ENCODE measurements at regions of chr6 and their contacts with region 1.

Region 1: DNA sequence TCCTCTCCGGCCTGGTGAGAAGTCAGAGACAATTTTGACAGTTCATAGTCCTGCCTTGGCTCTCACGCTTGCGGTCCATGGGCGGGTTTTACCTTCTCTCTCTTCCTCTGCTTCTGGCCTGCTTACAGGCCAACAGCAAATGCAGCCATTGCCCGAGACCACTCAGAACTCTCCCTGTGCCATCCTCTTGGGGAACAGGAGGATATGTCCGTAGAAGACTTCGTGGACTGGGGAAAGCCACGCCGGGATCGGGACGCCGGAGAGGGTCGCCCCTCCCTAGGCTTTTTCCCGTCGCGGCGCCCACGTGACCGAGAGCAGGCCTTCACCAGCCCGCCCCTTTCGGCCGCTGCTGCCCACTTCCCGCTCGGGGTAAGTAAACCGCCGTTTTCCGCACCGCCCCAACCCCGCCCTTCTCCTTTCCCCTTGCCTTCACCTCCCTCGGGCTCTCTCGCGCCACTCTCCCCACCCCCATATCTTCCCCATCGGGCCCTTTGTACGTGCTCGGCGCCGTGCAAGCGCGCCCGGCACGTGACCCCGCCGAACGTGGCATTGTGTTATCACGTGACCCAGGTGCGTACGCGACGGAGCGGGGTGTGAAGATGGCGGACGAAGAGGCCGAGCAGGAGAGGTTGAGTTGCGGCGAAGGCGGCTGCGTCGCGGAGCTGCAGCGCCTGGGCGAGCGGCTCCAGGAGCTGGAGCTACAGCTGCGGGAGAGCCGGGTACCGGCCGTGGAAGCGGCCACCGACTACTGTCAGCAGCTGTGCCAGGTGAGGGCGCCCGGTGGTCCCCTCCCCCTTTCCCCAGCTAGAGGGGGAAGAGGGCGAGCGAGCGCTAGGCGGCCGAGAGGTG is at the start of gene ZNF292:
- DNase-seq: peak; percentile 92 to 96 (median 93)
- H3K4me3 ChIP-seq: peak within 1 kb of the TSS; percentile 54 to 93
- H3K4me3 Mint-ChIP-seq: peak within 1 kb of the TSS; percentile 91 to 100 (median 96)
- H3K27ac ChIP-seq: peak within 1 kb of the TSS; percentile 91
- H3K27ac Mint-ChIP-seq: peak within 1 kb of the TSS; percentile 92 to 99 (median 96)
- H3K4me1 ChIP-seq: peaks cover 73% of the 10 kb centered on the region
- H3K4me1 Mint-ChIP-seq: peaks cover 38 to 70% (median 51%) of the 10 kb centered on the region in 4 donors
- H3K27me3 ChIP-seq: no peaks in the 10 kb centered on the region
- H3K27me3 Mint-ChIP-seq: no peaks in the 10 kb centered on the region
- total RNA-seq, gene ZNF292: 74.8 to 82.1 TPM

Region 2: DNA sequence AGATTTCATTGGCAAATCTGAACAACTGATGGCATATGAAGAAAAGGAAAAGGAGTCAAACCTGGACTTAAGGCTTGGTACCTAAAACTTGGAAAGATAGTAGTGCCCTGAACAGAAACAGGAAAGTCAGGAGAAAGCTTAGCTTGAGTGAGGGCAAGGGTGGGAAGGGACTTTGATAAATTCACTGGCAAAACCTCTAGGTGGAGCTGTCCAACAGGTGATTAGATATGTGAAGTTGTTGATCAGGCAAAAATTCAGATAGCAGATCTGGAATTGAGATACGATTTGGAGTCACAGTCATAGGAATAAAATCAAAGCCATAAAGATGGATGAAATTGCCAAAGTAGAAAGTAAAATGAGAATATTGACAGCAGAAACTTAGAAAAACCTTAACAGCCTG is 16.0 kb before region 1 on chr6:
- CTCF ChIA-PET with region 1: interaction called, 23 read pairs
- POLR2A ChIA-PET with region 1: interaction called, 3 read pairs
- intact Hi-C with region 1: loop called (anchors 1 kb)
- DNase-seq: peak; percentile 50 to 71 (median 68)
- H3K4me3 ChIP-seq: no peak overlapping the region
- H3K4me3 Mint-ChIP-seq: no peak overlapping the region
- H3K27ac ChIP-seq: no peak overlapping the region
- H3K27ac Mint-ChIP-seq: peak overlapping the region in 1 of 7 donors; percentile 80
- H3K4me1 ChIP-seq: no peaks in the 10 kb centered on the region
- H3K4me1 Mint-ChIP-seq: peaks cover 0 to 4% (median 3%) of the 10 kb centered on the region in 4 donors
- H3K27me3 ChIP-seq: no peaks in the 10 kb centered on the region
- H3K27me3 Mint-ChIP-seq: peaks cover 5 to 6% of the 10 kb centered on the region in 2 donors

Region 3: GRCh38 chr6:87237804-87238203 is 82.6 kb after region 1 on chr6:
- CTCF ChIA-PET with region 1: interaction called, 4 read pairs
- POLR2A ChIA-PET with region 1: no interaction called
- intact Hi-C with region 1: loop called (anchors 5 kb)
- DNase-seq: peak in 4 of 5 donors; percentile 15 to 33 (median 23)
- H3K4me3 ChIP-seq: no peak overlapping the region
- H3K4me3 Mint-ChIP-seq: no peak overlapping the region
- H3K27ac ChIP-seq: no peak overlapping the region
- H3K27ac Mint-ChIP-seq: peak overlapping the region in 1 of 7 donors; percentile 29
- H3K4me1 ChIP-seq: no peaks in the 10 kb centered on the region
- H3K4me1 Mint-ChIP-seq: peaks cover 0 to 8% (median 5%) of the 10 kb centered on the region in 4 donors
- H3K27me3 ChIP-seq: no peaks in the 10 kb centered on the region
- H3K27me3 Mint-ChIP-seq: no peaks in the 10 kb centered on the region

Region 4: DNA sequence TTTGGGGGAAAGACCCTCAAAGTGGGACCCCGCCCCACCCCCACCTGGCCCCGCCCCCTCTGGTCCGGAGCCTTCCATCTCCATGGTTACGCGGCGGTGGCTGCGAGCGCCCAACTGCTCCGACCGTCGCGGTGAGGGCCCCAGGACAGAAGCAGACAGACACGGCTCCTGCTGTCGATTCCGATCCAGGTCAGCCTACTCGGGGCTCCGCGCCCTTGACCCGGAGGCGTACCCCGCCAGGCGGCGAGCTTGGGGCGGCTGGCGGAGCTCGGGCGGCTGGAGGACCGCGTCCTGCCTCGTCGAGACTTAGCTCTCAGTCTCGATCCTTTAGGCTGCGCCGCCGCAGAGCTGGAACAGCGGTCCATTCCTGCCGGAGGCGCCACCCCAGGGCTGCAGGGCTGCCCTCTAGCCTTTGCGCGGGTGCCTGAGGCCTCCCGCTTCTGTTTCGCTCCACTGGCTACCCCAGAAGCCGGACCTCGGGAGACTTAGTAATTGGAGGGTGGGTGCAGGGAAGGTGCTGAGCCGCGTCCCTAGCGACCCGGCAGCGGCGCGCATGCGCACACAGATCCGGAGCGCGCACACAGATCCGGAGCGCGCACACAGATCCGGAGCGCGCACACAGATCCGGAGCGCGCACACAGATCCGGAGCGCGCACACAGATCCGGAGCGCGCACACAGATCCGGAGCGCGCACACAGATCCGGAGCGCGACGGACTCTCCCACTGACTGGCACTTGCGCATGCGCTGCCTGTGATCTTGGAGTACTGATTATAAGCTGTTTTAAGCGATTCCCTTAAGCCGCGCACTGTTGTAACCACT is 252.9 kb after region 1 on chr6 and contains the start of gene CFAP206:
- CTCF ChIA-PET with region 1: no interaction called
- POLR2A ChIA-PET with region 1: no interaction called
- intact Hi-C with region 1: loop called (anchors 1 kb)
- DNase-seq: peak; percentile 79 to 88 (median 85)
- H3K4me3 ChIP-seq: peak within 1 kb of the TSS; percentile 75 to 84
- H3K4me3 Mint-ChIP-seq: peak within 1 kb of the TSS; percentile 88 to 96 (median 89)
- H3K27ac ChIP-seq: peak within 1 kb of the TSS; percentile 67
- H3K27ac Mint-ChIP-seq: peak within 1 kb of the TSS; percentile 83 to 93 (median 89)
- H3K4me1 ChIP-seq: peaks cover 11% of the 10 kb centered on the region
- H3K4me1 Mint-ChIP-seq: peaks cover 4 to 13% (median 5%) of the 10 kb centered on the region in 4 donors
- H3K27me3 ChIP-seq: no peaks in the 10 kb centered on the region
- H3K27me3 Mint-ChIP-seq: peaks cover 4 to 10% of the 10 kb centered on the region in 2 donors
- total RNA-seq, gene CFAP206: 0.25 TPM in 1 of 2 experiments, not detected in the other

Region 5: DNA sequence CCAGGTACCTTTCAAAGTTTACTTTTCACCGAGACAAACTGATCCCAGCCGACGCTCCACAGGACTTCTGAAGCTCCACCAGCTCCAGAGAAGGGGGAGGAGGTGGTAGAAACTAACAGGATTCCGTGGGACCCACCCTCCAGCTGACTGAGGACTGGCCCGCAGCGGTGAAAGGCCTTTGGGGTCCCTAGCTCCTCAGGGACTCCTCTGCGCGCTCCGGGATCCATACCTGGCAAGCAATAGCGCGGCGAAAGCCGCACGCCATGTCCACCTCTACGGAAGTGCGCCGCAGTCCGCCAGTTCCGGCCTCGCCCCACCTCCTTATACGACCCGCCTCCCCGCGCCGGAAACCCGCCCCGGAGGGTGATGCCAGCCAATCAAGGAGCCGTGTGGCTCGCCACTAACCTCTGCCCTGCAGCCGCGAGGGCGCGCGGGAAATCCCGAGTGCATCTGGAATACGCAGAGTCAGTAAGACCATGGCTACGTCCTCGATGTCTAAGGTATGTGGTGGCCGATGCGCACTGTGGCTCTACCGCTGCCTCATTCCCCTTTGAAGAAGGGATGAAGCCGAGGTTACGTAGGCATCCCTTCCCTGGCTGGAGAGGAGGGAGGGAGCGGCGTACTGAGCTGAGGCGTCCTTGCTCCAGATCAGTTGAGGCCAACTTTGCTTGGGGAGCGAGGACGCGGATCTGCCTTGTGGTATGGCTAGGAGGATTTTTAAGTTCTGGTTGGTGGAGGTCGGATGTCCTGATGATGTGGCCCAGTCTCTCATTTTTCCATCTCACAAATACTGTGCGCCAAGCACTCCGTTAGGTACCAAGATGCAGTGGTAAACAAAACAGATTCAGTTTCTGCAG is 434.7 kb after region 1 on chr6 and contains the starts of genes ORC3 and RARS2:
- CTCF ChIA-PET with region 1: no interaction called
- POLR2A ChIA-PET with region 1: interaction called, 4 read pairs
- intact Hi-C with region 1: loop called (anchors 5 kb)
- DNase-seq: peak; percentile 91 to 95 (median 93)
- H3K4me3 ChIP-seq: peak within 1 kb of the TSS; percentile 80 to 97
- H3K4me3 Mint-ChIP-seq: peak within 1 kb of the TSS; percentile 94 to 97 (median 96)
- H3K27ac ChIP-seq: peak within 1 kb of the TSS; percentile 84
- H3K27ac Mint-ChIP-seq: peak within 1 kb of the TSS; percentile 87 to 98 (median 95)
- H3K4me1 ChIP-seq: peaks cover 49% of the 10 kb centered on the region
- H3K4me1 Mint-ChIP-seq: peaks cover 44 to 75% (median 56%) of the 10 kb centered on the region in 4 donors
- H3K27me3 ChIP-seq: no peaks in the 10 kb centered on the region
- H3K27me3 Mint-ChIP-seq: no peaks in the 10 kb centered on the region
- total RNA-seq, gene ORC3: 30.4 to 30.7 TPM
- total RNA-seq, gene RARS2: 38.8 to 39.3 TPM